Right ventricle myocardium inferior (tissue), 1 donor: ENCODE measurements at regions of chr2 and their contacts with region 1.

Region 1: GRCh38 chr2:25851740-25852503 is 26.4 kb downstream of the ASXL2 start:
- DNase-seq: peak; percentile 65
- ATAC-seq: peak; percentile 77

Region 2: DNA sequence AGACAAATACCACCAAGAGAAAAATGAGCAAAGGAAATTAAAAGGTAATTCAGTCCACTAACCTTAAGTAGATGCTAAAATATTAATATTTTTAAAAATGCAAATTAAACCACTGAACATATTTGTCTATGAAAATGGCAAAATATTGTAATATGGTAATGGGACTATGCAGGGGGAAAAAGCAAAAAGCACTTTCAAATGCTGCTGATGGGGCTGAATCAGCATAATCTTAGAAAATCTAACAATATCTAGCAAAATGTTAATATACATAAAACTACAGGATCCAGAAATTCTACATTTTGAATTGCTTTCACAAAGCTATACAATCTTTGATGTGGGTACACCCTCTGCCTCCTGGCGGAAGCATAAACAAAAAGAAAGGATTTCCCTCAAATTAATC is 91.6 kb before region 1 on chr2:
- intact Hi-C with region 1: no loop called
- DNase-seq: no peak
- ATAC-seq: no peak

Region 3: DNA sequence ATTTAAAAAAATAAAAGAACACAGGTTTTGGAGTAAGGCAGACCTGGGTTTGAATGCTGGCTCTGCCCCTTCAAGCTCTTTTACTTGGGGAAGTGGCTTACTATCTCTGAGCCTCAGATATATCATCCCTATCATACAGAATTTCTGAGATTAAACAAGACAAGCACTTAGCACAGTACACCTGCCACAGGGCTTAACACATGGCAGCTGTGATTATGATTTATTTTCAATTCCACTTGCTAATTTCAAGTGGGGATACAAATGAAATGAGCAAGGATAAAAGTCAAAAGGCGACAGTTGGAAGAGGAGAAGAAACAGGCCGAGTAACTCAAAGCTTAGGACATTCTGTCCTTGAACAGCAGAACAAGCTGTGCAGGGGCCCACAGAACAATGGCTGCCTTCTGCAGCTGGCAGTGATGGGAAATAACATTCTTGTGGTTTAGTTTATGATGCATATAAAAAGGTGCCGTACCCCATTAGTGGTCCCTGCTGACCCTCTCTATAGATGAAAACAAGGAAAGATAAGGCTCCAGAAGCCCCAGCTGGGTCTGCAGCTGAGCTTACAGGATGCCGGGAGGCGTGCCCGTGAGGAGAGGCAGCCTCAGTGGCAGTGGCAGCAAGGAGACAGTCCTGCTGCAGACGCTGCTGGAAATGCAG is 85.1 kb after region 1 on chr2:
- intact Hi-C with region 1: loop called (anchors 5 kb)
- DNase-seq: no peak
- ATAC-seq: no peak

Region 4: DNA sequence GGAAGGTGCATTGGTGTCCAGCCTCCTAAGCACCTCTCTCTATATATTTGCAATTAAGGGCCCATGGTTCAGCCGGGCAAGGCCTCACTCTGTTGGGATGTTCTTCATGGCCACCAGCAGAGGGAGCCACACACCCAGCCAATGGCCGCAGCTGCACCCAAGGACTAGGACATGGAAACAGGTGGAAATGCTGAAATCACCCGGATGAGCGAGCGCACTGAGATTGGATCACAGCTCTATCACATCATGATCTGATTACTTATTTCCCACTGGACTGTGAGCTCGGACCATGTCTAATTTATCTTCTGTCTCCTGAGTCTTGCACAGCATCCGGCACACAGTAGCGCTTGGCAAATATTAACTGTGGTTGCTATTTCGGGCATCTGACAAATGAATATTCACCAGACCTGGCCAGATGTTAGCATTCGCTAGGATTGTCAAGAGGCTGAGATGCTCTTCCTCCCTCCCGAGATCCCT is 99.2 kb after region 1 on chr2:
- intact Hi-C with region 1: loop called (anchors 5 kb)
- DNase-seq: peak; percentile 89
- ATAC-seq: peak; percentile 95